ENCODE measurements at regions of chr2 and their contacts with region 1.

Region 1: DNA sequence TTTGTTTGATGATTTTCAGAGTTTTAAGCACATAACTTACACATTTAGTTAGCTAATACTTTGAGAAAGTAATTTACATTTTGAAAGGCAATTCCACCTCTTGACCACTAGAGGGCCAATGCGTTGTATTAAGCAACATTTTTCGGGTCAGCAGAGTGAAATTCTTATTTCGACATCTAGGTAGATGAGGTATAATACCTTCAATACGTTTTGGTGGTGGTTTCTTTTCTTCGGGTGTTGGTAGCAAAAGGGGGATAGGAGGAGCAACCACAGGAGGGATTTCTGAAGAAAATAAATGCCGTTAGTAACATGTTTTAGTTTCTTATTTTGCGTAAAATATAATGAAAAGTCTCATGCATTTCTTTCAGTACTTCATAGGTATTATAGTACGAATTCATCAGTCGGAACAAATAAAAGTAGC is 106.3 kb downstream of the TTN start:
- DNase-seq: no peak
- ATAC-seq: peak; percentile 37
- H3K4me3 Mint-ChIP-seq: no peak overlapping the region
- H3K27ac Mint-ChIP-seq: no peak overlapping the region
- H3K4me1 Mint-ChIP-seq: peaks cover 2% of the 10 kb centered on the region
- H3K27me3 Mint-ChIP-seq: no peaks in the 10 kb centered on the region
- CTCF ChIP-seq: peak; percentile 92

Region 2: GRCh38 chr2:178681081-178681480 is 19.9 kb before region 1 on chr2:
- CTCF ChIA-PET with region 1: interaction called, 22 read pairs
- POLR2A ChIA-PET with region 1: no interaction called
- intact Hi-C with region 1: no loop called
- DNase-seq: no peak
- ATAC-seq: no peak
- H3K4me3 Mint-ChIP-seq: no peak overlapping the region
- H3K27ac Mint-ChIP-seq: no peak overlapping the region
- H3K4me1 Mint-ChIP-seq: peaks cover 2% of the 10 kb centered on the region
- H3K27me3 Mint-ChIP-seq: no peaks in the 10 kb centered on the region
- CTCF ChIP-seq: no peak

Region 3: DNA sequence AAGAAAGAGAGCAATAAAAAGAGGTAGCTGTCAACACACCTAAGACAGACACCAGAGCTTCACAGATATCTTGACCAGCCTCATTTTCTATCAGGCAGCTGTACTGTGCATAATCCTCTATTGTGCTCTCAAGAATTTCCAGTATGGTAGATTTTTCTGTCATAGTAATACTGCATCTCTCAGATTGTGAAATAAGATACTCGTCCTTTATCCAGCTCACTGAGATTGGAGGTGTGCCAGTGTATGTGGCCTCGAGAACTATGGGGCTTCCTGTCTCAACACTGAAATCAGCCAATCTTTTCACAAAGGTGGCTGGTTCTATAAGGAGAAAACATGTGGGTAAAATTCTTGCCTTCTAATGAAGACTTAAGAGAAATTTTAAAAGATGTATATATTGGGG is 17.4 kb after region 1 on chr2:
- CTCF ChIA-PET with region 1: interaction called, 14 read pairs
- POLR2A ChIA-PET with region 1: no interaction called
- intact Hi-C with region 1: no loop called
- DNase-seq: no peak
- ATAC-seq: no peak
- H3K4me3 Mint-ChIP-seq: no peak overlapping the region
- H3K27ac Mint-ChIP-seq: no peak overlapping the region
- H3K4me1 Mint-ChIP-seq: no peaks in the 10 kb centered on the region
- H3K27me3 Mint-ChIP-seq: no peaks in the 10 kb centered on the region
- CTCF ChIP-seq: no peak

Region 4: GRCh38 chr2:178723786-178724346 is 22.9 kb after region 1 on chr2:
- CTCF ChIA-PET with region 1: interaction called, 14 read pairs
- POLR2A ChIA-PET with region 1: no interaction called
- intact Hi-C with region 1: no loop called
- DNase-seq: no peak
- ATAC-seq: no peak
- H3K4me3 Mint-ChIP-seq: no peak overlapping the region
- H3K27ac Mint-ChIP-seq: no peak overlapping the region
- H3K4me1 Mint-ChIP-seq: no peaks in the 10 kb centered on the region
- H3K27me3 Mint-ChIP-seq: no peaks in the 10 kb centered on the region
- CTCF ChIP-seq: no peak

Measured in activated CD8-positive, alpha-beta T cell treated with anti-CD3 and anti-CD28 coated beads for 36 hours (primary cell).